A549 (cell line): ENCODE measurements at regions of chr4 and their contacts with region 1.

Region 1: GRCh38 chr4:176792671-176793605 is at the start of gene VEGFC:
- DNase-seq: peak in 1 of 2 experiments; percentile 73
- ATAC-seq: peak; percentile 87 to 92
- H3K4me3 ChIP-seq: peak within 1 kb of the TSS; percentile 92
- H3K27ac ChIP-seq: peak within 1 kb of the TSS; percentile 94 to 100
- H3K4me1 ChIP-seq: peaks cover 26% of the 10 kb centered on the region
- CTCF ChIP-seq: no peak; the same call in 2 of the 3 replicates
- EP300 ChIP-seq: no peak
- POLR2A ChIP-seq: no peak
- RAD21 ChIP-seq: peak in 1 of 2 experiments; percentile 34; a peak in 1 of 5 replicates
- polyA plus RNA-seq, gene VEGFC: 14.4 and 17.1 TPM in 2 replicates

Region 2: DNA sequence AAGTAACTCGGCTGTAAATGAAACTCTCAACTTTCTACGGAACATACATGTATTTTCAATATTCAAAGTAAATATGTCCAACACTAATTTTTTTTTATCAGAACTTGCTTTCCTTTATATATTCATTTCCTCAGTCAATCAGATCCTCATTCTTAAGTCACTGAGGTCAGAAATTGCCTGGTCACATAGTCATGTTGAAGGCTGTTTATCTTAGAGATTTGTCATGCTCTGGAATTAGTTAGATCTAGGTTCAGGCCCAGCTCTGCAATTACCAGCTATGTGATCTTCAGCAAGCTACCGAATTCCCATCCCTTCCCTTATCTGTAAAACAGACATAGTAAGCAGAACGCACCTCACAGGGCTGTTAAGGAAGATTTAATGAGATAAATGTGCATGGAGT is 244.4 kb before region 1 on chr4:
- CTCF ChIA-PET with region 1: no interaction called
- POLR2A ChIA-PET with region 1: no interaction called
- DNase-seq: peak in 1 of 2 experiments; percentile 50
- ATAC-seq: peak in 1 of 2 experiments; percentile 60; a peak in 3 of 6 replicates
- H3K4me3 ChIP-seq: no peak overlapping the region
- H3K27ac ChIP-seq: peak overlapping the region in 1 of 2 experiments; percentile 62; a peak in 3 of 6 replicates
- H3K4me1 ChIP-seq: peaks cover 15% of the 10 kb centered on the region
- CTCF ChIP-seq: no peak
- EP300 ChIP-seq: no peak
- POLR2A ChIP-seq: no peak
- RAD21 ChIP-seq: no peak

Region 3: GRCh38 chr4:176635372-176636261 is 157.3 kb before region 1 on chr4:
- CTCF ChIA-PET with region 1: no interaction called
- POLR2A ChIA-PET with region 1: interaction called, 11 read pairs
- DNase-seq: peak; percentile 80 to 97
- ATAC-seq: peak; percentile 88 to 90
- H3K4me3 ChIP-seq: no peak overlapping the region
- H3K27ac ChIP-seq: peak overlapping the region; percentile 94
- H3K4me1 ChIP-seq: peaks cover 44% of the 10 kb centered on the region
- CTCF ChIP-seq: no peak; the same call in 2 of the 3 replicates
- EP300 ChIP-seq: peak; percentile 95 to 98
- POLR2A ChIP-seq: no peak
- RAD21 ChIP-seq: peak; percentile 34 to 59

Region 4: DNA sequence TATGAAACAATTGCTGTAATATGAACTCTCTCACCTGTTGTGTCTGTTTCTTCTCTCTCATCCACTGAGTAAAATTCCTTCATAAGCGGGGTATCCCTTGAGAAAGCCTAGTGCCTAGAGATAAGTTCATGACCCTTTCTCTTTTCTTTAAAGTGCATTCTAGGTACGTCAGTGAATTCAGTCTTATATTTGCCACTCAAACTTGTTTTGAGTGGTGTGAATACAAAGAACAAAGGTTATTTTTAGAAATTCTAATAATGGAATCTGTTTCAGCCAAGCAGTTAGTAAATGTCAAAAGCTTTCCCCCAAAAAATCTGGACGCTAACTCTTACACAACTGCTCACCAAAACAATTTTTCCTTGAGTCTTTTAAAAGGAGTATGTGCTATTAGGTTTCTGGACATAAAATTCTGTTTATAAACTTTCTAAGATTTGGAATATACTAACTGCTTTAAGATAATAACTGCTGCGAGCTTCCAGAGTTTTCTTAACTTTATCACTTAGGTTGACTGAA is 112.2 kb before region 1 on chr4:
- CTCF ChIA-PET with region 1: no interaction called
- POLR2A ChIA-PET with region 1: no interaction called
- DNase-seq: no peak
- ATAC-seq: no peak
- H3K4me3 ChIP-seq: no peak overlapping the region
- H3K27ac ChIP-seq: no peak overlapping the region
- H3K4me1 ChIP-seq: no peaks in the 10 kb centered on the region
- CTCF ChIP-seq: no peak
- EP300 ChIP-seq: no peak
- POLR2A ChIP-seq: no peak
- RAD21 ChIP-seq: no peak

Region 5: GRCh38 chr4:176814770-176815169 is 21.8 kb after region 1 on chr4:
- CTCF ChIA-PET with region 1: no interaction called
- POLR2A ChIA-PET with region 1: no interaction called
- DNase-seq: no peak
- ATAC-seq: no peak
- H3K4me3 ChIP-seq: no peak overlapping the region
- H3K27ac ChIP-seq: no peak overlapping the region
- H3K4me1 ChIP-seq: no peaks in the 10 kb centered on the region
- CTCF ChIP-seq: no peak
- EP300 ChIP-seq: no peak
- POLR2A ChIP-seq: no peak
- RAD21 ChIP-seq: no peak